ENCODE measurements at regions of chr14 and their contacts with region 1.

Region 1: GRCh38 chr14:58637391-58638230 is at the start of gene DACT1:
- DNase-seq: peak in 7 of 9 experiments; percentile 27 to 61 (median 35)
- ATAC-seq: peak; percentile 66
- H3K4me3 ChIP-seq: peak within 1 kb of the TSS; percentile 43 to 51
- H3K4me3 Mint-ChIP-seq: peak within 1 kb of the TSS; percentile 90
- H3K27ac ChIP-seq: no peak within 1 kb of the TSS
- H3K27ac Mint-ChIP-seq: peak within 1 kb of the TSS; percentile 2
- H3K4me1 ChIP-seq: no peaks in the 10 kb centered on the region
- H3K4me1 Mint-ChIP-seq: peaks cover 21% of the 10 kb centered on the region
- H3K27me3 ChIP-seq: peaks cover 0 to 3% of the 10 kb centered on the region in 2 experiments
- H3K27me3 Mint-ChIP-seq: peaks cover 36% of the 10 kb centered on the region
- CTCF ChIP-seq: no peak
- total RNA-seq, gene DACT1: 0.38 to 0.78 TPM

Region 2: DNA sequence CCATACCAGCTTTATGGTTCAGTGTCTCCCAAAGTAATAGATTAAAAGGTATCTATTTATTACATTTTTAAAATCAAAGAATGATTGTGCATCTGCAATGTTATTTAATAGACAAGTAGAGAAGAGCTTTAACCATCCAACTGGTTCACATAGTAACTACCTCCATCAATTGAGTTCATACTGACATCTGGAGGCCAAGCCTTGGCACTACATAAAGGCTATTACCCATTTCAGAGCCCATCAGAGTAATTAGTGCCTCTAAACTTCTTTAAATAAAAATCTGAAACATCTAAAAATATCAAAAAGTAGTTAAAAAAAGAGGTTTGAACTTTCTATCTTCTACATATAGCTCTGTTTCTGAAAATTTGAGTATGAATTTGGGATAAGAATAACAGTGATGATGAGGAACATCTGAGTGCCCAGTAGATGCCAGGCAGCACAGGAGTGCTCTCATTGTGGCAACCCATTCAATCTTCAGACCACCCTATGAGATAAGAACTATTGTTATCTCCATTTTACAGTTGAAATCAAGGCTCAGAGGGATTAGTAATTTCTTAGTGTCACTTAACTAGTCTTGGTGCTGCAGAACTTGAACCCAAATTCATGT is 417.9 kb after region 1 on chr14:
- CTCF ChIA-PET with region 1: no interaction called
- POLR2A ChIA-PET with region 1: no interaction called
- intact Hi-C with region 1: loop called in 1 of 2 experiments (anchors 10 kb)
- DNase-seq: peak in 3 of 9 experiments; percentile 14 to 41 (median 14)
- ATAC-seq: no peak
- H3K4me3 ChIP-seq: no peak overlapping the region
- H3K4me3 Mint-ChIP-seq: no peak overlapping the region
- H3K27ac ChIP-seq: no peak overlapping the region
- H3K27ac Mint-ChIP-seq: no peak overlapping the region
- H3K4me1 ChIP-seq: no peaks in the 10 kb centered on the region
- H3K4me1 Mint-ChIP-seq: no peaks in the 10 kb centered on the region
- H3K27me3 ChIP-seq: no peaks in the 10 kb centered on the region
- H3K27me3 Mint-ChIP-seq: peaks cover 7% of the 10 kb centered on the region
- CTCF ChIP-seq: peak; percentile 70